ENCODE measurements at regions of chr17 and their contacts with region 1.

Region 1: DNA sequence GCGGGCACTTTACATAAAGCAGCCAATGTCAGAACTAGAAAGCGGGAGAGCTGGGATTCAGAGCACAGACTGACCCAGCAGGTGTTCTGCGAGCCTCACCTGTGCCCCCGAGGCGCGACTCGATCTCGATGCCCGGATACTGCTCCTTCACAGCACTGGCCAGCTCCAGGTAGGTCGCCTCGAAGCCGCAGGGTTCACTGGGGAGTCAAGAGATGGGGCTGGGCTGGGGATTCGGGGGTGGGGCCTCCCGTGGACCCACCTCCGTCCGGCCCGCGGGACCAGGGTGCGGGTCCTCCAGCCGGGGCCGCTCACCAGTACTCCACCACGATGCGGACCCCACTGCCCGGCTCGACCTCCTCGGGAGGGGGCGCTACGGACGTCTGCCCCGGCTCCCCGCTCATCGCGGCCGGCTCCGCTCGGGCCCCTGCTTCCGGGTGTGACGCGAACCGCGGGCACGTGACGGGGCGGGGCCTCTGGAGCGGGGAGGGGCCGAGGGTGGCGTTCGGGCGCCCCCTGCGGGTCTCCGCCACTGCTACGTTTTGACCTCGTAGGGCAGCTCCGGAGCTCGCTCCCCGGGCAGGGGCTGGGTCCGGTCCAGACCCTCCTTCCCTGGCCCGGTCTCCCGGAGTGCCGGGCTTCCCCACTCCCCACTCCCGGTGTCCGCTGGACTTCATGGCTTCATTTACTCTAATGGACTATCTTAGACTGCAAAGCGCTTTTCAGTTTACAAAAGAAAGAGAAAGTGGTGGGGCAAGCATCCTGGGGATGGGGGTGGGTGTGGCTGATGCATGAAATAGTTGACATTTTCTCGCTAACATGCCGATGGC is at the start of gene MIEN1:
- DNase-seq: peak; percentile 95
- ATAC-seq: peak; percentile 94
- H3K4me3 ChIP-seq: peak within 1 kb of the TSS; percentile 63 to 100 (median 78)
- H3K4me3 Mint-ChIP-seq: peak within 1 kb of the TSS; percentile 93
- H3K27ac ChIP-seq: peak within 1 kb of the TSS; percentile 82 to 96
- H3K27ac Mint-ChIP-seq: peak within 1 kb of the TSS; percentile 94
- H3K4me1 ChIP-seq: peaks cover 11 to 17% of the 10 kb centered on the region in 2 donors
- H3K4me1 Mint-ChIP-seq: peaks cover 28% of the 10 kb centered on the region
- H3K27me3 ChIP-seq: no peaks in the 10 kb centered on the region
- H3K27me3 Mint-ChIP-seq: no peaks in the 10 kb centered on the region
- CTCF ChIP-seq: peak; percentile 96
- total RNA-seq, gene MIEN1: 37.9 and 41.1 TPM in 2 replicates

Region 2: GRCh38 chr17:39653662-39654331 is 76.5 kb before region 1 on chr17:
- CTCF ChIA-PET with region 1: interaction called, 15 read pairs
- POLR2A ChIA-PET with region 1: interaction called, 5 read pairs
- intact Hi-C with region 1: no loop called
- DNase-seq: peak; percentile 71
- ATAC-seq: peak; percentile 71
- H3K4me3 ChIP-seq: no peak overlapping the region
- H3K4me3 Mint-ChIP-seq: no peak overlapping the region
- H3K27ac ChIP-seq: no peak overlapping the region
- H3K27ac Mint-ChIP-seq: no peak overlapping the region
- H3K4me1 ChIP-seq: peaks cover 8 to 16% of the 10 kb centered on the region in 2 donors
- H3K4me1 Mint-ChIP-seq: peaks cover 36% of the 10 kb centered on the region
- H3K27me3 ChIP-seq: no peaks in the 10 kb centered on the region
- H3K27me3 Mint-ChIP-seq: no peaks in the 10 kb centered on the region
- CTCF ChIP-seq: peak; percentile 80

Region 3: GRCh38 chr17:39687811-39688518 is 42.3 kb before region 1 on chr17 and contains the start of gene PGAP3:
- CTCF ChIA-PET with region 1: interaction called, 3 read pairs
- POLR2A ChIA-PET with region 1: no interaction called
- intact Hi-C with region 1: loop called (anchors 1 kb)
- DNase-seq: peak; percentile 94
- ATAC-seq: peak; percentile 94
- H3K4me3 ChIP-seq: peak within 1 kb of the TSS; percentile 65 to 92 (median 75)
- H3K4me3 Mint-ChIP-seq: peak within 1 kb of the TSS; percentile 99
- H3K27ac ChIP-seq: peak within 1 kb of the TSS; percentile 70 to 87
- H3K27ac Mint-ChIP-seq: peak within 1 kb of the TSS; percentile 98
- H3K4me1 ChIP-seq: peaks cover 15 to 18% of the 10 kb centered on the region in 2 donors
- H3K4me1 Mint-ChIP-seq: peaks cover 21% of the 10 kb centered on the region
- H3K27me3 ChIP-seq: no peaks in the 10 kb centered on the region
- H3K27me3 Mint-ChIP-seq: no peaks in the 10 kb centered on the region
- CTCF ChIP-seq: no peak
- total RNA-seq, gene PGAP3: 34.3 and 36.9 TPM in 2 replicates

Region 4: DNA sequence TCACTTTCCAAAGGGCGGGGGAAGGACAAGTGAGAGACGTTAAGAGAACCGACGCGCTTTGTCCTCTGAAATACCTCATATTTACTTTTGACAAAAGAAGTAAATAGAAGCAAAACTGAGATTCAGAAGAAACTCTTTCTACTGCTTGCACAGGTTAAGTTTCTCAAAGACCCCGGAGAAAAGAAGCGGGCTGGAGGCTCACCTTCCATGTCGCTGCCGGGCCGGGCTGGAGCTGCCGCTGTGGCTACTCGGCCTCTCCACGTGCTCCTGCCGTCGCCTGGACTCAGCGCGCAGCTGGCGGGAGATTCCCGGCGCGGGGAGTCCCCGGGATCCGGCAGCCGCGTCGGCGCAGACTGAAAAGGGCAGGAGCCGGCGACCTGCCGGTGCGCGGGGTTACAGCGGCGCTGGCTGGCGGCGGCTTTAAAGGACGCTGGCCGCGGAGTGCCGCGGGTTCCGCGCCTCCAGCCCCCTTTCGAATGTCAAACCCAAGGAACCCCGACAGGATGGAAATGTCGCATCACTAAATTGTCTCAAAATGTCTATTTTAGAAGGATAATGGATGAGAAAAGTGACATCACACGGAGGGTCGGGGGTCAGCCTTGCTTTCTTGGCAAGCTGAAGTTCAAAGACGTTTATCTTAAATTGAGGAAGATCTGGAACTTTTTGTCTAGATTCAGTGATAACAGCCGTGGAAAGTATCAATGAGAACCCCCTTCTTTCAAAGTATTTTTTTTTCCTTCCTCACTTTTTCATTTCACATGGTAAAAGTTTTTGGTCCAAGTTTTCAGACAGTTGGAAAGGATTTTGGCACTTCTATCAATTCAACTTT is 133.8 kb after region 1 on chr17 and contains the start of gene IKZF3:
- CTCF ChIA-PET with region 1: interaction called, 17 read pairs
- POLR2A ChIA-PET with region 1: interaction called, 7 read pairs
- intact Hi-C with region 1: no loop called
- DNase-seq: peak; percentile 90
- ATAC-seq: peak; percentile 62
- H3K4me3 ChIP-seq: peak within 1 kb of the TSS; percentile 80 to 99 (median 91)
- H3K4me3 Mint-ChIP-seq: peak within 1 kb of the TSS; percentile 99
- H3K27ac ChIP-seq: peak within 1 kb of the TSS; percentile 94 to 96
- H3K27ac Mint-ChIP-seq: peak within 1 kb of the TSS; percentile 87
- H3K4me1 ChIP-seq: peaks cover 43 to 55% of the 10 kb centered on the region in 2 donors
- H3K4me1 Mint-ChIP-seq: peaks cover 62% of the 10 kb centered on the region
- H3K27me3 ChIP-seq: no peaks in the 10 kb centered on the region
- H3K27me3 Mint-ChIP-seq: no peaks in the 10 kb centered on the region
- CTCF ChIP-seq: peak; percentile 45
- total RNA-seq, gene IKZF3: 178 and 187 TPM in 2 replicates

Region 5: DNA sequence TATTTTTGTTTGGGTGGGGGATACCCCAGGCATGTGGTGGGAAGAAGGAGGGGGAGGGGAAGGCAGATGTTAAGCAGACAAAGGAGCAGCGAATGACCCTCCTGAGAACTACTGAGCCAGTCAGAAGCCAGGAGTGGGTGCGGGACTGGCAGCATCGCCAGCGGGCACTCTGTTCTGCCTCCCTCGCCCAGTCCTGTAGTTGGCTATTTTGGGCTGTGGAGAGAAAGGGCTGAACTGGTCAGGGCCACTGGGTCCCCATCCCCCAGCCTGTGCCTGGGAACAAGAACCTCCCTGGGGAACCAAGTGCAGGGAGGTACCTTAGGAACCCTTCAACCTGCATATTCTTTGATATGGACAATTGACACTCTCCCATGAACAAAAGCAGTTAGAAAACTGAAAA is 203.6 kb after region 1 on chr17:
- CTCF ChIA-PET with region 1: no interaction called
- POLR2A ChIA-PET with region 1: interaction called, 11 read pairs
- intact Hi-C with region 1: no loop called
- DNase-seq: no peak
- ATAC-seq: no peak
- H3K4me3 ChIP-seq: no peak overlapping the region
- H3K4me3 Mint-ChIP-seq: no peak overlapping the region
- H3K27ac ChIP-seq: no peak overlapping the region
- H3K27ac Mint-ChIP-seq: no peak overlapping the region
- H3K4me1 ChIP-seq: peaks cover 0 to 4% of the 10 kb centered on the region in 2 donors
- H3K4me1 Mint-ChIP-seq: peaks cover 2% of the 10 kb centered on the region
- H3K27me3 ChIP-seq: no peaks in the 10 kb centered on the region
- H3K27me3 Mint-ChIP-seq: no peaks in the 10 kb centered on the region
- CTCF ChIP-seq: no peak